ENCODE measurements at regions of chr4 and their contacts with region 1.

Region 1: DNA sequence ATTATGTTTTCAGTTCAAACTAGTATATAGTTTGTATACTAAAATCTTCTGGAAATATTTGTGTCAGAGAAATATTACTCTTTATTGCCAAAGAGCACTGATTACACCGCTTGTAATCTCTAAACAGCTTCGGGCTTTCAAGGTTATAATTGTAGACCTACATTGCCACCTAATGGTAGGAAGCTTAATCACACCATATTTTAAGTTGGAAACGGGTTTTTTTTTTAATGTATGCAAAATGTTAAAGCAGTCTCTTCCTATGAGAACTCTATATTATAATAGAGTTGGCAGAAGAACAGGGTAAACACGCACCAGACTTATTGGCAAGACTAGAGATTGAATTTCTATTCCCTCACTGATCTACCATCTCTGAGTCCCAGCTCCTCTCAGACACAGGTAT is 19.5 kb upstream of the NFXL1 start:
- DNase-seq: no peak
- H3K4me3 ChIP-seq: no peak overlapping the region
- CTCF ChIP-seq: peak; percentile 34

Region 2: DNA sequence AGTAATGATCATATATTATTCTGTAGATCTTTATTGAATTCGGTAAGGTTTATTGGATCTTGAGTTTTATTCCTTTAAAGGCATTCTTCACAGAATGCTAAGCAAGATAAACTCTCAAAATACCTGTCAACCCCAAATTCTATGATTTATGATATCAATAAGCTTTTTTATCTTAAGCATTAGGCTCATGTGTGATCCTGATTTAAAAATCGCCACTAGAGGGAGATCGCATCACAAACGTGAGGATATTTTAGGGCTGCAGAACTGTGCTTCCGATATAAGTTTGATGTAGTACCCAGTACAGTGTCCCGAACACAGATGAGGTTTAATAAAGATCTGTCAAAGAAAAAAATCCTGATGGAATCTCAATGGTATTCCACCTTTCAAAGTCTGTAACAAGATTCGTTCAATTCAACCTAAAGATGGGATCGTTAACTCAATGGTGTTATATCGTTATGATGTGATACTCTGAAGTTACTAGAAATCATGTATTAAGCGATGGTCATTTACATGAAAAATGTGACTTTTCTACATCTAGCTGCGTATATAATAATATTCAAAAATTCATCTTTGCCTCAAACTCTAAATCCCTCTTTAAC is 264.9 kb before region 1 on chr4:
- CTCF ChIA-PET with region 1: interaction called, 32 read pairs
- POLR2A ChIA-PET with region 1: no interaction called
- DNase-seq: no peak
- H3K4me3 ChIP-seq: no peak overlapping the region
- CTCF ChIP-seq: peak; percentile 60

Region 3: DNA sequence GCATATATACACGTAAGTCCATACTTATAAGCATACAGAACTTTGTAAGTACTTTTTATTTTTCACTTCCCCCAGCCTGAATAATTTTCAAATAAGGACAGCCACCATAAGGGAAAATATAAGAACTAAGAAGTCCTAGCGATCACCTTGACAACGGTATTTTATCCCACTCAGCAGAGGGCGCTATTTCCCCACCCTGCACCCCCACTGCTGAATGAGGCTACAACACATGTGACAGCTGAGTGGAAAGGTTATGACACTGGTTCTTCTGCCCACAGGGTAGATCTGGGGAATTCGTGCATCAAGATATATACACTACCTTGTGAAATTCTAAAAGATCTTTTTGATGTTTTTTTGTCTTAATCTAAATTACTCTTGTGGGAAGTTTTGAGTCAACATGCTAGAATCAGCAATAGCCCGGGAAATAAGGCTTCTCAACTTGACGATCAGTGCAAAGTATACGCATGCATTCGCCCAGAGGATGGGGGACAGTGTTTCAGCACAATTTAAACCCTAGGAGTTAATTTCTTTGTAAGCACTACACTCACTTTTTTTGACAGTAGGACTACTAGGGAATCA is 247.5 kb before region 1 on chr4:
- CTCF ChIA-PET with region 1: interaction called, 42 read pairs
- POLR2A ChIA-PET with region 1: no interaction called
- DNase-seq: no peak
- H3K4me3 ChIP-seq: no peak overlapping the region
- CTCF ChIP-seq: peak; percentile 64

Region 4: DNA sequence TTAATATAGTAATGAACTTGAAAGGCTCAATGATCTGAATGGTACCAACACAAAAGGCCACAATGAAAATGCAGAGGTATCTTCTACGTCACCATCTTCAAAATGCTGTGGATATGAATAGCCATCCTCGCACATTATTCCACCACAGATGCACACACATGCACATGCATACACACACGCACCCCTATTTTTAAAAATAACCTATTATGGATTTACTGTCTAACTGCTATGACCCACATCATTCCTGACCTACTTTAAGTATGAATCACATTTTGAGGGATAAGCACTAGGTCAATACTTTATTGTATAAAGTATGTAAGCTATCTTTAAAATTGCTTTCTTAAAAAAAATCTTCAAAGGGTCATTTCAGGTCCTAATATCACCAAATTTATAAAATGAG is 71.5 kb before region 1 on chr4:
- CTCF ChIA-PET with region 1: no interaction called
- POLR2A ChIA-PET with region 1: no interaction called
- DNase-seq: no peak
- H3K4me3 ChIP-seq: no peak overlapping the region
- CTCF ChIP-seq: no peak

Region 5: DNA sequence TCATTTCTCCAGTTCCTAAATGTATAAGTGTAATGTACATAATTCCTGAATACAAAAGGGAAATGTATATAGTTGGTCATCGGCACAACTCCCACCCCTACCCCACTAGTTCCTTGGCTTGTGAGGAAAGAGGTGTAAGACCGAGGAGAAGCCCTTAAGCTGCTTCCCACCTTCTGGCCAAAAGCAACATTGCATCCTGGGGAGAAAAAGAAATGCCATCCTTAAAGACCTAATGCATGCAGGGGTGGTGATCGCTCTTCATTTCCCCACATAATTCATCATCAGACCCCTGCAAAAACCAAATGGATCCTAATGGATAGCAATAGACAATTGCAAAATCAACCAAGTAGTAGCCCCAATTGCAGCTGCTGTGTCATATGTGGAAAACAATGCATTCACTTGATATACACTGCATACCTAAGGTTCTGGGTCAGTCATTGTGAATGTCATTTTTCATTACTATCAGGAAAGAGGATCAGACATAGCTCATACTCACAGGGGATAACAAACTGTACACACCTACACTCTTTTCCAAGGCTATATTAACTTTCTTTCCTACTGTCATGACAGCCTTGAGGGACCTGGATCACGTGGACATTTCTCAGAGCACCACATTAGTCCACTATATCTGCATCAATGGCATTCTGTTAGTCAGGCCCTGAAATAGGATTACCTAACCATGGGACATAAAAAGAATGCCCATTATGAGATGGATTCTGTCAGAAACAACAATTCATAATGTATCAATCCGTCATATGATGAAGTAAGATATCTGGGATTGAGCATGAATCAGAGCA is 12.3 kb after region 1 on chr4:
- CTCF ChIA-PET with region 1: interaction called, 17 read pairs
- POLR2A ChIA-PET with region 1: no interaction called
- DNase-seq: no peak
- H3K4me3 ChIP-seq: no peak overlapping the region
- CTCF ChIP-seq: no peak

Region 6: GRCh38 chr4:48058284-48058962 is 124.6 kb after region 1 on chr4:
- CTCF ChIA-PET with region 1: no interaction called
- POLR2A ChIA-PET with region 1: no interaction called
- DNase-seq: no peak
- H3K4me3 ChIP-seq: no peak overlapping the region
- CTCF ChIP-seq: no peak

Region 7: GRCh38 chr4:48069025-48069424 is 135.2 kb after region 1 on chr4:
- CTCF ChIA-PET with region 1: no interaction called
- POLR2A ChIA-PET with region 1: no interaction called
- DNase-seq: no peak
- H3K4me3 ChIP-seq: no peak overlapping the region
- CTCF ChIP-seq: no peak